SK-N-SH (cell line): ENCODE measurements at regions of chr17 and their contacts with region 1.

Region 1: DNA sequence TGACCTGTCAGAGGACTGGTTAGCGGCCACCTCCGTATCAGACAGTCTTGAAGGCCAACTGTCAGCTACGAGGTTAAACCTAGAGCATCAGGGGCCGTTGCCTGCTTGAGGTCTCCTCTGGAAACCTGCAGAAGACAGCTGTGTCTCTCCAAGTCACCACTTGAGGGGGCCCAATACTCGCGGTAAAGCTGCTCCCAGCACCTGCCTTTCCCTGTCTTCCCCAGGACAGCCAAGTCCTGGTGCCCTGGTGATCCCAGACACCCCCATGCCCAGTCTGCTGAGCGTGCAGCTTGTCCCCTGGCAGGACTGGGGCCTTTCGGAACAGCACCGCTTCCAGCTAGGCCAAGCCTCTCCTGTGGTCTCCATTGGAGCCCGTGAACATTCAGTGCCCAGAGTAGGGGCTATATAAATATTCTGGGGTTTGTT is 80.1 kb downstream of the DNAH17 start:
- DNase-seq: peak; percentile 96
- H3K4me3 ChIP-seq: no peak overlapping the region
- H3K27ac ChIP-seq: no peak overlapping the region
- H3K4me1 ChIP-seq: peaks cover 0 to 23% of the 10 kb centered on the region in 2 experiments; a peak in 1 of 4 replicates
- H3K27me3 ChIP-seq: no peaks in the 10 kb centered on the region
- CTCF ChIP-seq: peak; percentile 92
- EP300 ChIP-seq: no peak
- RAD21 ChIP-seq: peak; percentile 100

Region 2: DNA sequence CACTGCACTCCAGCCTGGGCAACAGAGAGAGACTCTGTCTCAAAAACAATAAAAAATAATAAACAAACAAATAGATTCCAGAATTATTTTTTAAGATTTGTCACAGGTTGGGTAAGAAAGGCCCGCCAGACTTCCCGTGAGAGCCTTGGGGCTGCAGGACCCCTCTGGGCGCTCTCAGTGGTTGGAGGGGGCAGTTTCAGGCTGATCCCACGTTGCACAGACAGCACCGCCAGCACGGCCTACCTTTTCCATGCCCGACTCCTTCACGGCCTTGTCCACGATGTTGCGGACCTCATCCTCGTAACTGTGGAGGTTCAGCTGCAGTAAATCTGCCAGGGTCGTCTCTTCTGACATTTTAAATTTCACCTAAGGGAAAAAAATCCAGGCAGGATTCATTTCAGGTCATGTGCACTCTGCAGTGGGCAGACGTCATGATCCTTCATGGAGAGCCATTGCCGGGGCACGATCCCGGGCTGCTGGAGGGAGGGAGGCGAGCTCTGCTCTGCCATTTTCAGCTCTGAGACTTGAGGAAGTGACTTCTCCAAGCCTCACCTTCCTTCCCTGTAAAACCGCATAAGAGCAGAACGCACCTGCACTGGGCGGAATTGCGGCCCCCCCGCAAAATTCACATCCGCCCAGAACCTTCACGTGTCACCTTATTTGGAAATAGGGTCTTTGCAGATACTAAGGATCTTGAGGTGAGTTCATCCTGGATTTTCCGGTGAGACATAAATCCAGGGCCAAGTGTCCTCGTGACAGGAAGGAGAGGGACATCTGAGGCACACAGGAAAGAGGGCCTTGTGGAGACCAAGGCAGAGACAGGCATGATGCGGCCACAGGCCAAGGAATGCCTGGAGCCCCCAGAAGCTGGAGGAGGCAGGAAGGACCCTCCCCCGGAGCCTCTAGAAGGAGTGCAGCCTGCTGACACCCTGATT is 13.3 kb after region 1 on chr17:
- CTCF ChIA-PET with region 1: interaction called, 27 read pairs
- POLR2A ChIA-PET with region 1: no interaction called
- DNase-seq: no peak
- H3K4me3 ChIP-seq: no peak overlapping the region
- H3K27ac ChIP-seq: no peak overlapping the region
- H3K4me1 ChIP-seq: no peaks in the 10 kb centered on the region; a peak in 1 of 4 replicates
- H3K27me3 ChIP-seq: 0 out of 2 replicates have a peak, but pooled peaks cover 6% of the 10 kb centered on the region
- CTCF ChIP-seq: no peak
- EP300 ChIP-seq: no peak
- RAD21 ChIP-seq: no peak

Region 3: DNA sequence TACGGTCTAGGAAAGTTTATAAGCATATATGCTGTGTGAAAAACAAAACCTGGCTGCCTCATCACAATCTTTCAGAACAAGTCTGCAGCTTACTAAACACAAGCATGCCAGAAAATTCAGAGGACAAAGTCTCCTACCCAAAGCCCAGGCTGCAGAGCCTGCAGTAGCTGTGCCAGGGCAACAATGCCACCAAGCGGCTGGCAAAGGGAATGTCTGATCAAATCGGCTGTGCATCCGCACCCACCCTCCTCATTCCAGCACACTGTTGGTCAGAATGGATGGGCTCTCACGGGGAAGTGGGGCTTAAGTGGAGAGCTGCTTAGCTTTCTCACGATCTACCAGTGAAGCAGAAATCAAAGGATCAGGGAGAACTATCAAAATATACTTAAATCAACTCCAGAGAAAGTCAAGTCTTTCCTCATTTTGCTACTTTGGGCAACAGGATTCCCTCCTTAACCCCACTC is 211.4 kb after region 1 on chr17:
- CTCF ChIA-PET with region 1: interaction called, 351 read pairs
- POLR2A ChIA-PET with region 1: interaction called, 6 read pairs
- DNase-seq: peak; percentile 86
- H3K4me3 ChIP-seq: no peak overlapping the region
- H3K27ac ChIP-seq: peak overlapping the region in 1 of 2 experiments; percentile 83; a peak in 2 of 4 replicates
- H3K4me1 ChIP-seq: peaks cover 9 to 66% of the 10 kb centered on the region in 2 experiments
- H3K27me3 ChIP-seq: no peaks in the 10 kb centered on the region
- CTCF ChIP-seq: peak; percentile 99
- EP300 ChIP-seq: no peak
- RAD21 ChIP-seq: peak; percentile 100

Region 4: DNA sequence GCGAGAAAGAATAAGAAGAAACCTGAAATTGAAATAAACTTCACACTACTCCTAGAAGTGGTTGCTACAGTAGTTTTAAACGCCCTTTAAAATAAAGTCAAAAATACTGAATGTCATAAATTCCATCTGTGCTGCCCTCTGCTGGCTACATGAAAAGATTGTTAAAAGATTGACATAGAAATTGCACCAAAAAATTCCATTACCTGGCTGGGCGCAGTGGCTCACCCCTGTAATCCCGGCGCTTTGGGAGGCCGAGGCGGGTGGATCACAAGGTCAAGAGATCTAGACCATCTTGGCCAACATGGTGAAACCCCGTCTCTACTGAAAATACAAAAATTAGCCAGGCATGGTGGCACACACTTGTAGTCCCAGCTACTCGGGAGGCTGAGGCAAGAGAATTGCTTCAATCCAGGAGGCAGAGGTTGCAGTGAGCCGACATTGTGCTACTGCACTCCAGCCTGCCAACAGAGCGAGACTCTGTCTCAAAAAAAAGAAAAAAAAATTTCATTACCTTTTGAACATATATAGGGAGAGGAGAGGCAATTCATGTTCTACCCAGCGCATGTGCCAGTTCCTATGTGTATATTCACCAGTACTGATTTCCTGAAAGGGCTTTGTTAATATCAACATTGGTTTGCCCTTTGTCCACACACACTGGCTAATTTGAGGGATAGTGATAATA is 248.4 kb after region 1 on chr17:
- CTCF ChIA-PET with region 1: interaction called, 33 read pairs
- POLR2A ChIA-PET with region 1: no interaction called
- DNase-seq: no peak
- H3K4me3 ChIP-seq: no peak overlapping the region
- H3K27ac ChIP-seq: no peak overlapping the region
- H3K4me1 ChIP-seq: peaks cover 4 to 14% of the 10 kb centered on the region in 2 experiments; a peak in 3 of 4 replicates
- H3K27me3 ChIP-seq: no peaks in the 10 kb centered on the region
- CTCF ChIP-seq: peak; percentile 92
- EP300 ChIP-seq: no peak
- RAD21 ChIP-seq: peak; percentile 72

Region 5: DNA sequence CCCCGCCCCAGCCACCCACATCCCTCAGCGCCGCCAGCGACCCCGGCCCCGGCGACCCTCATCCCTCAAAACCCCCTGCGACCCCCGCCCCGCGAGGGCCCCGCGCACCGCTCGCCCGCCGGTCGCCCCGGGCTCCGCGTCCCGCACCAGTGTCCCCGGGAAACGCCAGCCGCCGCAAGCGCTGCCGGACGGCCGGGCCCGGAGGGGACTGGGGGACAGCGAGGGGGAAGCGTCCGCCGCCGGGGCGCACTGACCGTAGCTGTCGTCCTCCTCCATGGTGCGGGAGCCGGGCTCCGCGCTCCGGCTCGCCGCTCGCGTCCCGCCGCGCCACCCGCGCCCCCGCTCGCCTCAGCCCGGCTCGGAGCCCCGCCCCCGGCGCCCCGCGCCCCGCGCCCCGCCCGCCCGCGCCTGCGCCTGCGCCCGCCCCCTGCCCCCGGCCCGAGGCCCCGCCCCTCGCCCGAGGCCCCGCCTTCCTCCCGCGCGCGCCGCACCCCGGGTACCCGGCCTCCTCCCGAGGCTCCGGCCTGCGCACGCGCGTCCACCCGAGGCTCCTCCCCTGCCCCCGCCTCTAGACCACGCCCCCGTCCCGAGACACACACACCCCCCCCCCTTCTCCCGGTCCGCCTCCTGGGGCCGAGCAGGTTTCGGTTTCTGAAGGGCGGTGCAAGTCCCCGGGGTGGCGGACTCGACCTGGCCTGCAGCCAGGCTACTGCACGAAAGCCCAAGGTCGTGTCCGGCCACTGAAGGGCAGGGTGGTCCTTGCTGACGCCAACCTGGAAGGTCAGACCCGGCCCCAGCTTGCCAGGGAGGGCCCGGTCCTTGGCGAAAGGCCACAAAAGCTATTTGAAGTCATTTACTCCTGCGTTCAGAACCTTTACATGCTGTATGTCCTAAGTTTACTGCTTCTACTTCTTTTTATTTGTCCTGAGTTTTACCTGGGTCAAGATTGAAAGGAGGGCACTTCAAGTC is 285.1 kb after region 1 on chr17 and contains the start of gene CYTH1:
- CTCF ChIA-PET with region 1: interaction called, 30 read pairs
- POLR2A ChIA-PET with region 1: no interaction called
- DNase-seq: peak; percentile 100
- H3K4me3 ChIP-seq: peak within 1 kb of the TSS; percentile 63 to 91
- H3K27ac ChIP-seq: peak within 1 kb of the TSS; percentile 76 to 87
- H3K4me1 ChIP-seq: peaks cover 0 to 3% of the 10 kb centered on the region in 2 experiments; a peak in 1 of 4 replicates
- H3K27me3 ChIP-seq: no peaks in the 10 kb centered on the region
- CTCF ChIP-seq: no peak
- EP300 ChIP-seq: no peak
- RAD21 ChIP-seq: no peak
- polyA plus RNA-seq, gene CYTH1: 23.8 and 24.8 TPM in 2 replicates

Region 6: DNA sequence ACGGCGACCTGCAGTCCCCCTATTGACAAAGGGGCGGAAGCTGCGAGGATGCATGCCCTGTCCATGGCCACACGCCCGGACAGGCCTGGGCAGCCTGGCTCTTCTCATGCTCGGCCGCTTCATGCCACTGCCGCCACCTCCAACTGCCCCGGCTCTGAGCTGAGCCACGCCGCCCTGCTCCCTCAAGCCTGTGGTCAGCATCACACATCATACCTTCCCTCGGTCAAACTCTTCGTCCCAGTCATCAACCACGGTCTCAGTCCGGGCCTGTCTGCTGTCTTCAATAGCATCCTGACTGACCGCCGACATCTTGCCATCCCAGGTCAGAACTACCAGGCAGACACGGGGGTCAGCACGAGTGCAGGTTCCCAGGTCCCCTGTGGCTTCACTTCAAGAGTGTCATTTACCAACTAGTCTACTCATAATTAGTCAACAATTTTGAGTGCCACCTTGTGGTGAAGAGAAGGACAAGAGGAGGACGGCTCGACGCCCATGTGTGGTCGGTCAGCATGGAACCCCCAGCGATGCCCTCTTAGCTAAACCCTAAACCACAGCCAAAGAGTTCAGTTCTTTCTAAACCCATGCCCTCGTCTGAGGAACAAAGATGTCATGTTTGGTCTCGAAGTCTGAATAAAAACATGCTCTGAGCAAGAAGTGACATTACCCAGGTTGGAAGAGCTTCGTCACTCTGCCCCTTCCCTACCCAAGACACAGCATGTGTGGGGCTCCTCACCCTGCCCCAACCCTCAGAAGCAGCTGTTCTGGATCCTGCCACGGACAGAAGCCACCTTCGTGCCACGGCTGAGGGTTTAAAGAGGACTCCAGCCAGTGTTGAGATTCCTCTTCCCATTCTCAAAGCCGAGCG is 301.8 kb after region 1 on chr17:
- CTCF ChIA-PET with region 1: interaction called, 35 read pairs
- POLR2A ChIA-PET with region 1: interaction called, 3 read pairs
- DNase-seq: peak; percentile 70
- H3K4me3 ChIP-seq: no peak overlapping the region
- H3K27ac ChIP-seq: no peak overlapping the region
- H3K4me1 ChIP-seq: no peaks in the 10 kb centered on the region
- H3K27me3 ChIP-seq: no peaks in the 10 kb centered on the region
- CTCF ChIP-seq: peak; percentile 55
- EP300 ChIP-seq: no peak
- RAD21 ChIP-seq: peak; percentile 51